Activated B cell treated with CpG ODN at 0.5 μM for 24 hours (primary cell): ENCODE measurements at regions of chr2 and their contacts with region 1.

Region 1: GRCh38 chr2:20822535-20823490 is at the start of gene LDAH:
- DNase-seq: peak; percentile 84
- ATAC-seq: peak; percentile 83
- H3K4me3 Mint-ChIP-seq: peak within 1 kb of the TSS; percentile 97
- H3K27ac Mint-ChIP-seq: peak within 1 kb of the TSS; percentile 97
- H3K4me1 Mint-ChIP-seq: peaks cover 21% of the 10 kb centered on the region
- H3K27me3 Mint-ChIP-seq: no peaks in the 10 kb centered on the region
- CTCF ChIP-seq: no peak
- total RNA-seq, gene LDAH: 31.2 and 31.7 TPM in 2 replicates

Region 2: GRCh38 chr2:19901442-19902215 is 921.2 kb before region 1 on chr2 and contains the start of gene TTC32:
- CTCF ChIA-PET with region 1: no interaction called
- POLR2A ChIA-PET with region 1: interaction called, 3 read pairs
- intact Hi-C with region 1: loop called (anchors 10 kb)
- DNase-seq: peak; percentile 91
- ATAC-seq: peak; percentile 91
- H3K4me3 Mint-ChIP-seq: peak within 1 kb of the TSS; percentile 99
- H3K27ac Mint-ChIP-seq: peak within 1 kb of the TSS; percentile 99
- H3K4me1 Mint-ChIP-seq: peaks cover 44% of the 10 kb centered on the region
- H3K27me3 Mint-ChIP-seq: peaks cover 7% of the 10 kb centered on the region
- CTCF ChIP-seq: no peak
- total RNA-seq, gene TTC32: 18.4 and 22.8 TPM in 2 replicates

Region 3: GRCh38 chr2:19989681-19990415 is 833.0 kb before region 1 on chr2 and contains the start of gene WDR35:
- CTCF ChIA-PET with region 1: no interaction called
- POLR2A ChIA-PET with region 1: no interaction called
- intact Hi-C with region 1: loop called (anchors 5 kb)
- DNase-seq: peak; percentile 93
- ATAC-seq: peak; percentile 89
- H3K4me3 Mint-ChIP-seq: peak within 1 kb of the TSS; percentile 91
- H3K27ac Mint-ChIP-seq: peak within 1 kb of the TSS; percentile 85
- H3K4me1 Mint-ChIP-seq: peaks cover 31% of the 10 kb centered on the region
- H3K27me3 Mint-ChIP-seq: peaks cover 18% of the 10 kb centered on the region
- CTCF ChIP-seq: no peak
- total RNA-seq, gene WDR35: 8.1 and 8.2 TPM in 2 replicates

Region 4: GRCh38 chr2:20666304-20667150 is 156.3 kb before region 1 on chr2 and contains the start of gene GDF7:
- CTCF ChIA-PET with region 1: interaction called, 4 read pairs
- POLR2A ChIA-PET with region 1: interaction called, 24 read pairs
- intact Hi-C with region 1: loop called (anchors 2 kb)
- DNase-seq: peak; percentile 67
- ATAC-seq: peak; percentile 78
- H3K4me3 Mint-ChIP-seq: peak within 1 kb of the TSS; percentile 87
- H3K27ac Mint-ChIP-seq: peak within 1 kb of the TSS; percentile 82
- H3K4me1 Mint-ChIP-seq: peaks cover 32% of the 10 kb centered on the region
- H3K27me3 Mint-ChIP-seq: peaks cover 8% of the 10 kb centered on the region
- CTCF ChIP-seq: no peak
- total RNA-seq, gene GDF7: 5.9 and 6.7 TPM in 2 replicates

Region 5: DNA sequence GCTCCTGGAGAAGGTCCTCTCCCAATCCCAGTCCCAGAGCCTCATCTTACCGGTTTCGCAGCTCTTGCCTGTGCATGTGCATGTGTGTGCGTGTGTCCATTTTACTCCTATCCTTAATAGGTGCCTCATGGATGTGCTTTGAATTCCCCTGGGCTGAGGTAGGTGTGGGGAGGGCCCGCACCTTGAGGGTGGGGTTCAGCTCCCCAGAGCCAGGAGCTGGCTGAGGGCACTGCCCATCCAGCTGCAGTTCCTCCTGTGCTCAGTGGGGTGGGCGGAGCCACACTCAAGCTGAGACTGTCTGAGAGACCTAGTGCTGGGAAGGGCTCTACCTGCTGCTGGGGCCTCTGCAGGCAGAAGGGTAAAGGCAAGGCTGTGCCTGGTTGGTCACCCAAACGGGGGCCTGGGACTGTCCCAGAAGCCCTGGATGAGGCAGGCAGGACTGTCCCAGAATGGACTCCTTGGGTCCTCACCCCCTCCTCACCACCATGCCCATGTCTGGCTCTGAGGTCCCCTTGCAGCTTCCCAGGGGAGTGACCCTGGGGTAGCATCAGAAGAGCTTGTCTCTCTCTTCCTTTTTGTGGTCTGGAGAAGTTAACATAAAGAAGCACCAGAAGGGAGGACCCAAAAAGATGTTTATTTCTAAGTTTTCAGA is 147.0 kb before region 1 on chr2:
- CTCF ChIA-PET with region 1: no interaction called
- POLR2A ChIA-PET with region 1: interaction called, 20 read pairs
- intact Hi-C with region 1: loop called (anchors 1 kb)
- DNase-seq: peak; percentile 51
- ATAC-seq: peak; percentile 82
- H3K4me3 Mint-ChIP-seq: peak overlapping the region; percentile 64
- H3K27ac Mint-ChIP-seq: peak overlapping the region; percentile 94
- H3K4me1 Mint-ChIP-seq: peaks cover 73% of the 10 kb centered on the region
- H3K27me3 Mint-ChIP-seq: no peaks in the 10 kb centered on the region
- CTCF ChIP-seq: no peak

Region 6: DNA sequence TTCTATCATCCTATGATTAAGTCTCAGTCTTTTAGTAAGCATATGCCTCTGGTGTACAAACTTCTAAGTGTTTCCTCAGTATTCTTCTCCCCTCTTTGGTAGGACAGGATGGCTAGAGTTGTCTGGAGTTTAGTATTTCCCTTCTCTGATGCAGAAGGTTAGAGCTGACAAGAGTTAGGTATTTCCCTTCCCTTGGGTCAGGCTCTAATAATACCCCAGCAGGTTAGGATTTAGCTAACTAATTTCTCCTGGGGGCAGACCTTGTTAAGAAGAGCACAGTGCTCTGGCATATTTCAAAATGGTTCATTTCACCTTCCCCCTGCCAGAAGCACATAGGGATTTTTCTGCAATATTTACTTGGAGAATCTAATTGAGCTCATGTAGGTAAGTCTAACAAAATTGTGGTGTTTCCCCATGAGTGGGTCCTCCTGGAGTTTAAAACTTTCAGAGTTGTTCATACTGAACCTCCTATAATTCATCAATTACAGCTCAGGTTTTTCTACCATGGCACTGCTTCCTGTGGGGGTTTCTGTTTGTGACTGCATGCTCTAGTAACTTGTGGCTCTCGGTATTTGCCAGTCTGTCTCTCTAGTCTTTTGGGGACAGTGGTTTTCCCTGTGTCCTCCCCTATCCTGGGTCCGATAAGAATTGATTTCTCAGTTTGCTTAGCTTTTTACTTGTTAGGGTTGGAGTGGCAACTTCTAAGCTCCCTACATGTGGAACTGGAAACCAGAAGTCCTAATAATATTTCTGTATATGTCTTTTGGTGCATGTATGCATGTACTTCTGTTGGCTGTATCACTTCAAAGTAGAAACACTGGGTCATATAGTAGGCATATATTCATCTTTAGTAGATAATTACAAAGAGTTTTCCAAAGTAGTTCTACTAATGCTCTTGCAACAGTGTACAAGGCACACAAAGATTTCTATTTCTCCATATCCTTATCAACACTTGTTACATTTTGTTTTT is 78.2 kb before region 1 on chr2:
- CTCF ChIA-PET with region 1: no interaction called
- POLR2A ChIA-PET with region 1: interaction called, 11 read pairs
- intact Hi-C with region 1: no loop called
- DNase-seq: no peak
- ATAC-seq: peak; percentile 58
- H3K4me3 Mint-ChIP-seq: peak overlapping the region; percentile 59
- H3K27ac Mint-ChIP-seq: peak overlapping the region; percentile 74
- H3K4me1 Mint-ChIP-seq: peaks cover 24% of the 10 kb centered on the region
- H3K27me3 Mint-ChIP-seq: no peaks in the 10 kb centered on the region
- CTCF ChIP-seq: no peak